ENCODE measurements at regions of chr5 and their contacts with region 1.

Region 1: GRCh38 chr5:32232441-32233219 is 58.5 kb upstream of the GOLPH3 start:
- DNase-seq: peak; percentile 67 to 92
- H3K4me3 ChIP-seq: no peak overlapping the region
- H3K27ac ChIP-seq: no peak overlapping the region
- H3K4me1 ChIP-seq: peaks cover 8% of the 10 kb centered on the region; the same call in 1 of the 2 replicates
- H3K27me3 ChIP-seq: no peaks in the 10 kb centered on the region
- CTCF ChIP-seq: peak; percentile 98

Region 2: GRCh38 chr5:31593387-31594092 is 639.1 kb before region 1 on chr5:
- CTCF ChIA-PET with region 1: no interaction called
- POLR2A ChIA-PET with region 1: no interaction called
- intact Hi-C with region 1: no loop called
- DNase-seq: no peak
- H3K4me3 ChIP-seq: no peak overlapping the region
- H3K27ac ChIP-seq: no peak overlapping the region
- H3K4me1 ChIP-seq: no peaks in the 10 kb centered on the region
- H3K27me3 ChIP-seq: peaks cover 94% of the 10 kb centered on the region
- CTCF ChIP-seq: no peak

Region 3: GRCh38 chr5:31664566-31664965 is 568.1 kb before region 1 on chr5:
- CTCF ChIA-PET with region 1: no interaction called
- POLR2A ChIA-PET with region 1: no interaction called
- intact Hi-C with region 1: no loop called
- DNase-seq: peak in 1 of 2 experiments; percentile 25
- H3K4me3 ChIP-seq: no peak overlapping the region
- H3K27ac ChIP-seq: no peak overlapping the region
- H3K4me1 ChIP-seq: no peaks in the 10 kb centered on the region
- H3K27me3 ChIP-seq: peaks cover 90% of the 10 kb centered on the region
- CTCF ChIP-seq: peak; percentile 46

Region 4: DNA sequence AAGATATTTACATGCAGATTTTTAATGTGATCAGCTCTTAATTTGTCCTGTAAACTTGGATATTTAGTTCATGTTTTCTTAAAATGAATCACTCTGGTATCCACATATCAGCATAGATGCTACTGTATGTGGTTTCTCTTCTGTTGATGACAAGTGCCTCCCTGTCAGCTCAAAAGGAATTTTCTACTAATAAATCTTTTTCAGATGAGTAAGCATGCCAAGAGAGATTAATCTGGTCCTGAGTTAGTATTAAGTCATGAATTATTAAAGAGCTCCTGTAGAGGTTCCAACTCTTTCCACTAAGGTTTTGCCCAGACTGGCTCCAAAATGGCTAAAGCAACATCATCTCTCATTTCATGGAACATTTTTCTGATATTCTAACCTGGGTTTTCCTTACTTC is 187.7 kb before region 1 on chr5:
- CTCF ChIA-PET with region 1: no interaction called
- POLR2A ChIA-PET with region 1: no interaction called
- intact Hi-C with region 1: no loop called
- DNase-seq: no peak
- H3K4me3 ChIP-seq: no peak overlapping the region
- H3K27ac ChIP-seq: no peak overlapping the region
- H3K4me1 ChIP-seq: no peaks in the 10 kb centered on the region
- H3K27me3 ChIP-seq: peaks cover 64% of the 10 kb centered on the region
- CTCF ChIP-seq: no peak

Region 5: GRCh38 chr5:32123058-32123805 is 109.4 kb before region 1 on chr5:
- CTCF ChIA-PET with region 1: no interaction called
- POLR2A ChIA-PET with region 1: interaction called, 11 read pairs
- intact Hi-C with region 1: no loop called
- DNase-seq: no peak
- H3K4me3 ChIP-seq: no peak overlapping the region
- H3K27ac ChIP-seq: no peak overlapping the region
- H3K4me1 ChIP-seq: no peaks in the 10 kb centered on the region
- H3K27me3 ChIP-seq: no peaks in the 10 kb centered on the region
- CTCF ChIP-seq: no peak

Region 6: GRCh38 chr5:32210151-32210550 is 22.5 kb before region 1 on chr5:
- CTCF ChIA-PET with region 1: interaction called, 12 read pairs
- POLR2A ChIA-PET with region 1: no interaction called
- intact Hi-C with region 1: no loop called
- DNase-seq: no peak
- H3K4me3 ChIP-seq: no peak overlapping the region
- H3K27ac ChIP-seq: no peak overlapping the region
- H3K4me1 ChIP-seq: peaks cover 9% of the 10 kb centered on the region
- H3K27me3 ChIP-seq: no peaks in the 10 kb centered on the region
- CTCF ChIP-seq: no peak

Region 7: DNA sequence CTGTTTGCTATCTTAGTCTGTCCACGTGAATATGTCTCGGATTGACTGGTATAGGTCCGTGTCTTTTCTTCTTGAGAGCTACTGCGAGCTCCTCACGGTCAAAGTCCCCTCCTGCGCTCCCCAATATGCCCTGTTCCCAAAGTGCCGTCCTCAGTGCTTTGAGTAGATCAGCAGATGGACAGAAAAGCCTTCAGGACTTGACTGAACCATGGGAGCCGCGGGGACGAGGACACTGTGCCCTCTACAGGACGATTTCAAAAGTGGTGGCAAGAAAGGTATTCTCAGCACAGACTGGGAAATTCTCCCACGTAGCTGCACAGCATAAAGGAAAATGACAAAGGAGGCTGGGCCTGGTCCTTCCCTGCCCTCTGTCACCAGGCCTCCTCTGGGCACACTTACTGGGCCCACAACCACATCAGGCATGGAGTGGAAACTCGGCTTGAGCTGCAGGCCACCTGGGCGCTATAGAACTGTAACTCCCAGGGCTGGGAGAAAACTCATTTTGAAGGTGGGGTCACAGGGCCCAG is 96.7 kb after region 1 on chr5:
- CTCF ChIA-PET with region 1: interaction called, 19 read pairs
- POLR2A ChIA-PET with region 1: no interaction called
- intact Hi-C with region 1: loop called (anchors 1 kb)
- DNase-seq: peak; percentile 60 to 72
- H3K4me3 ChIP-seq: no peak overlapping the region
- H3K27ac ChIP-seq: no peak overlapping the region
- H3K4me1 ChIP-seq: peaks cover 14% of the 10 kb centered on the region
- H3K27me3 ChIP-seq: no peaks in the 10 kb centered on the region
- CTCF ChIP-seq: peak; percentile 83

Region 8: GRCh38 chr5:33415811-33416354 is 1183.3 kb after region 1 on chr5:
- CTCF ChIA-PET with region 1: no interaction called
- POLR2A ChIA-PET with region 1: no interaction called
- intact Hi-C with region 1: loop called (anchors 5 kb)
- DNase-seq: no peak
- H3K4me3 ChIP-seq: no peak overlapping the region
- H3K27ac ChIP-seq: no peak overlapping the region
- H3K4me1 ChIP-seq: no peaks in the 10 kb centered on the region
- H3K27me3 ChIP-seq: no peaks in the 10 kb centered on the region
- CTCF ChIP-seq: no peak

Measured in PC-9 (cell line).